ENCODE measurements at regions of chr6 and their contacts with region 1.

Region 1: GRCh38 chr6:31652925-31653718 is 661 bp upstream of the BAG6 start:
- DNase-seq: no peak
- H3K4me3 ChIP-seq: peak overlapping the region; percentile 88
- H3K27ac ChIP-seq: peak overlapping the region; percentile 98
- H3K27me3 ChIP-seq: no peaks in the 10 kb centered on the region
- CTCF ChIP-seq: no peak

Region 2: DNA sequence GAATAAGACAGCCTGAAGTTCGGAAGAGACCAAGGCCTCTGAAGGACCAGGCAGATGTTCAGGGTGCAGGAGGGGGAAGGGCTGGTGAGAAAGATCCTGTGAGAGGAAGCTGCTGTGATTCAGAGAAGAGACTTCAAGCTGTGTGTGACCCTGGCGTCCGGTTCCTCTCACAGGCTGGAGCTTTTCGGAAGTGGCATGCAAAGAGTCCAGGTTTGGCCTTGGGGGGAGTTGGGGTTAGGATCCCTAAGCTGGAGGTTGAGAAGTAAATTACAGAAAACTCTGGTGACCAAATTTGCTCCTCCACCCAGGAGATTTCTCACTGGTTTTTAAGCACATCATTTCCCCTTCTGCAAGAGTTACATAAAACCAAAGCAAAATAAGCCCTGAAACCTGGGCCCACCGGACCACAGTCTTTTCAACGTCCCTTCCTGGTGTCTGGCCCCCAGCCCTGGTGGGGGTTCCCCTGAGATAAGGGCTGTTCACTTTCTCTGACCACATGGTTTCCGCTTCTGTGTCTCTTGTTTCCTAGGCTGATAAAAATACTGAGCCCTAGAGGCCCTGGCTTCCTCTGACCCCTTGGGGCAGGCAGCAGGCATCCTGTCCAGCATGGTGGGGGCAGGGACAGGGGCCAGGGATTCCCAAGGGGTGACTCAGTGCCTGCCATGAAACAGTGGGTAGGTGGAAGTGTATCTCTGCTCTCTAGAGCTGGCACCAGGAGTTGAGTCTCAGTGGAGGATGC is 93.0 kb before region 1 on chr6:
- CTCF ChIA-PET with region 1: no interaction called
- POLR2A ChIA-PET with region 1: no interaction called
- DNase-seq: no peak
- H3K4me3 ChIP-seq: no peak overlapping the region
- H3K27ac ChIP-seq: peak overlapping the region; percentile 68
- H3K27me3 ChIP-seq: peaks cover under 1% of the 10 kb centered on the region
- CTCF ChIP-seq: no peak

Region 3: DNA sequence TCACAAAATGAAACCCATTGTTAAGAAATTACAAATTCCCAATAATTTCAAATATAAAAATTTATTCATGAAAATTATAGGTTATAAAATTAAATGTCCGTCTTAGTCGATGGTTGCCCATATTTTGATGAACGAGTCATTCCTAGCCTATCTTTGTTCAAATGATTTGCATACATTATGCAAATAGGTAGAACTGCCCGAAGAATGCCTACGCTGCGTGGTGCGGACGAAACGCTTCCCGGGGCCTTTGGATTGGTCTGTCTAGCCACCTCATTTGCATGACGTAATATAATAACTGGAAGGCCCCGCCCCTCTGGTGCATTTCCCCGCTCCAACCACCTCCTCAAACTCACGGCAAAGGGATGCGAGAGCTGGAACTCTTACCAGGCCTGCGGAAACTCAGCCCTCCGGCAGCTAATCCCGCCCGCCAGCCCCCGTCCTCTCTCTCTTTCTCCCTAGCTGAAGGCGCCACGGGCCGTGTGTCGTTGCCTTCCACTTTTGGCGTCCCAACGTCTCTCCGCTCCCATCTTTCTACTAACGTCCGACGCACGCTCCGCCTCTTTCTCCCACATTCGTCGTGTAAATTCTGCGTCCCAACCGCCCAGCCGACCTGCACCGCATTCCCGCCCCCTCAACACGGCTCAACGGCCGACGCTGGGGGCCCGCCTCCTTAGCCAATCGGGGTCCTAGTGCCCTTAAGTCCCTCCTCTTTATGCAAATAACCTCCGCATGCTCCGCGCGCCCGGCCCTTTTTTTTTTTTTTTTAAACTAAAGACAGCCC is 33.1 kb before region 1 on chr6:
- CTCF ChIA-PET with region 1: no interaction called
- POLR2A ChIA-PET with region 1: interaction called, 13 read pairs
- DNase-seq: peak; percentile 98
- H3K4me3 ChIP-seq: peak overlapping the region; percentile 82
- H3K27ac ChIP-seq: peak overlapping the region; percentile 100
- H3K27me3 ChIP-seq: no peaks in the 10 kb centered on the region
- CTCF ChIP-seq: no peak

Region 4: GRCh38 chr6:31639449-31639861 is 13.7 kb before region 1 on chr6:
- CTCF ChIA-PET with region 1: interaction called, 3 read pairs
- POLR2A ChIA-PET with region 1: interaction called, 37 read pairs
- DNase-seq: no peak
- H3K4me3 ChIP-seq: no peak overlapping the region
- H3K27ac ChIP-seq: peak overlapping the region; percentile 25
- H3K27me3 ChIP-seq: no peaks in the 10 kb centered on the region
- CTCF ChIP-seq: no peak

Region 5: DNA sequence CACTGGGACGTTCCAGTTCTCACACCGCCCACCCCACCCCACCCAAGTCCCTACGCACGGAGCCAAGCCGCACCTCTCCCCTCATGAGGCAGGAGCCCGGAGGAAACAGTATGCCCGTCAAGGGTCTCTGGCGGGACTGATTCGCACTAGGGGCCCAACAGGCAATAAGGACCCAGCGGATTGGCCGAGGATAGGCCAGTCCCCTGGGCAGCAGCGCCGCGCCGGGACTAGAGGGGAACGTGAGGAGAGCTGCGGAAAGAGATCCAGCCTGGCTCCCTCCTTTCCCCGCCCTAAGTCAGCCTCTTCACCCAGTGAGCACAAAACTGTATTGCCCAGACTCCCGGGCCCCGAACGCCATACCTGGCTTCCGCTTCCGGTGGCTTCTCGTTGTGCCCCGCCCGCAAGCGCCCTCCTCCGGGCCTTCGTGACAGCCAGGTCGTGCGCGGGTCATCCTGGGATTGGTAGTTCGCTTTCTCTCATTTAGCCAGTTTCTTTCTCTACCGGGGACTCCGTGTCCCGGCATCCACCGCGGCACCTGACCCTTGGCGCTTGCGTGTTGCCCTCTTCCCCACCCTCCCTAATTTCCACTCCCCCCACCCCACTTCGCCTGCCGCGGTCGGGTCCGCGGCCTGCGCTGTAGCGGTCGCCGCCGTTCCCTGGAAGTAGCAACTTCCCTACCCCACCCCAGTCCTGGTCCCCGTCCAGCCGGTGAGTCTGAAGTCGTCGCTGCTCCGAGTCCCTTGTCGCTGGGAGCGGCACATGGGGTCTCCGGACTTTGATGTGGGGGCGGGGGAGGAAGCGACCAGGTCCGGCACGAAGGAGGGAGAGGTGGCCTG is 12.6 kb after region 1 on chr6 and contains the start of gene CSNK2B:
- CTCF ChIA-PET with region 1: interaction called, 3 read pairs
- POLR2A ChIA-PET with region 1: interaction called, 20 read pairs
- DNase-seq: peak; percentile 91
- H3K4me3 ChIP-seq: peak within 1 kb of the TSS; percentile 98
- H3K27ac ChIP-seq: peak within 1 kb of the TSS; percentile 90
- H3K27me3 ChIP-seq: no peaks in the 10 kb centered on the region
- CTCF ChIP-seq: no peak
- polyA plus RNA-seq, gene CSNK2B: 80.1 and 96.0 TPM in 2 replicates

Region 6: GRCh38 chr6:32669240-32669639 is 1016.1 kb after region 1 on chr6:
- CTCF ChIA-PET with region 1: no interaction called
- POLR2A ChIA-PET with region 1: no interaction called
- DNase-seq: no peak
- H3K4me3 ChIP-seq: no peak overlapping the region
- H3K27ac ChIP-seq: no peak overlapping the region
- H3K27me3 ChIP-seq: no peaks in the 10 kb centered on the region
- CTCF ChIP-seq: no peak

Measured in AG04450 (cell line).